Transverse colon (tissue), 4 donors: ENCODE measurements at regions of chr11 and their contacts with region 1.

Region 1: DNA sequence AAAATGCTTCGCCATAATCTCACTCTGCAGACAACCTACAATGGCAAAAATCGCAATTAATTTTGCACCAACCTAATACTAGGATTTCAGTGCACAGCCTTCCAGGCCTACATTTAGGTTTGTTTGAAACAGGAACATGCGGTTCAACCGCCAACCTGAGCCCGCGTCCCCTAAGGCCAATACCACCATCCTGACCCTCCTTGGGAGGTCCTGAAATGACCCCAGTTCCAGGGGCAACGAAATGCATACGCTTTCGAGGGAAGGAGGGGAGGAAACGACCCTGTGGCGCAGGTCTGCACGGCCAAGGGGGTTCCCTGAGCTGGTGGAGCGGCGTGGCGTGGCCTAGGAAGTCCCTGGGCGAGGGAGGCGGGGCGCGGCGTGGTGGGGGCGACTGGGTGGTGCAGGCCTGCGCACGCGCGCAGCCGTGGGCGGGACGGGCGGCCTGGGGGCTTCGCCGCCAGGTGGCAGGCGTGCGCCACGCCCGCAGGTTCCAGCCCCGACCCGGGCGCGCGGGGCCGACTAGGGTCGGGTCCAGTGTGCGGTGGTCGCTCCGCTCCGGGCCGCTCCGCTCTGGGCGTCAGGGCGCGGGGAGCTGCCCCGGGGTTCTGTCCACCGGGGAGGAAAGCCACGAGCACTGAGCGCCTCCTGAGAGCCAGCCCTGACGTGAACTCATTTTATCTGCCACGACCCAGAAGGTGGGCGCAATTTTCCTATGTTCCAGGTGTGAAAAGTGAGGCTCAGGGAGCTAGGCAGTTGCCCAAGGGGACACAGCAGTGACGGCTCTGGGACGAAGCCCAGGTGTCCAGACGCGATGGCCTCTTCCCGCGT is 94.1 kb downstream of the SWAP70 start:
- DNase-seq: peak; percentile 92
- H3K4me3 ChIP-seq: peak overlapping the region; percentile 47 to 73 (median 60)
- H3K27ac ChIP-seq: peak overlapping the region; percentile 86 to 94 (median 91)
- H3K4me1 ChIP-seq: peaks cover 20 to 40% (median 28%) of the 10 kb centered on the region in 4 donors
- H3K27me3 ChIP-seq: no peaks in the 10 kb centered on the region
- CTCF ChIP-seq: peak; percentile 37 to 87 (median 77)
- EP300 ChIP-seq: no peak
- POLR2A ChIP-seq: peak; percentile 44

Region 2: DNA sequence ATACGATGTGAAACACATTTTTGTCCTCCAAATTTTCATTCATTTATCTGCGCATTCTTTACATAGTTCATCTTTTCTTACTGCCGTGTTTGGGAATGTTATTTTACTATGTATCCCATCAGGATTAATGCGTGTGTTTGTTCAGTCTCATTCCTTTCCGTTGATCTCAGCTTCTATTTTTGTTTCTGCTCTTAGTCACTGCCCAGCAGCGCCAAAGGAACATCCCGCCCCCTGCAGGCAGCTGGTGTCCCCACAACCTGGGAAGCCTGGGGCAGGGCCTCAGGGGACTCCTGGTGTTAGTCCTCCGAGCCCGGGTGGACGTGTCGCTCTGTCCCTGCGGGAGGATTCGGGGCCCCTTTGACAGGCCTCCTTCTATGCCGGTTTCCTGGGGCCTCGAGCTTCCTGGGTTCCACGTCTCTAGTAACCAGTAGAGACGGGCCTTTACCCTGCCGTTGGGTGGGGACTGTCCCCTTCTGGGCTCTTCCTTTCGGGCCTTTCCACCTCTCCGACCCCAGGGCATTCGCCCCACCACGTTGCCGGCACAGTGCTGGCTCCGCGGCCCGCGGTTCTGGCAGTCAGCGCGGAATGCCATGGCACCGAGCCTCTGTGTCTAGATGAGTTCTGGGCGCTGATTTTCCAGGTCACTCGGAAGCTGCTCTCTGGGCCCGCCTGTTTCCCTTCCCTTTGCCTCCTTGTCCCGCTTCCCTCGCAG is 144.7 kb before region 1 on chr11:
- in situ Hi-C with region 1: loop called in 1 of 4 experiments (anchors 10 kb)
- intact Hi-C with region 1: loop called (anchors 10 kb)
- DNase-seq: peak; percentile 95
- H3K4me3 ChIP-seq: peak overlapping the region; percentile 10 to 49 (median 39)
- H3K27ac ChIP-seq: peak overlapping the region; percentile 89 to 98 (median 96)
- H3K4me1 ChIP-seq: peaks cover 0 to 25% (median 9%) of the 10 kb centered on the region in 4 donors
- H3K27me3 ChIP-seq: no peaks in the 10 kb centered on the region
- CTCF ChIP-seq: peak; percentile 93 to 99 (median 95)
- EP300 ChIP-seq: peak; percentile 71
- POLR2A ChIP-seq: peak; percentile 73

Region 3: GRCh38 chr11:10307442-10308207 is 549.6 kb after region 1 on chr11:
- in situ Hi-C with region 1: loop called in 3 of 4 experiments (anchors 10 to 25 kb)
- intact Hi-C with region 1: loop called (anchors 5 kb)
- DNase-seq: peak; percentile 89
- H3K4me3 ChIP-seq: peak overlapping the region; percentile 48 to 74 (median 60)
- H3K27ac ChIP-seq: peak overlapping the region; percentile 90 to 96 (median 92)
- H3K4me1 ChIP-seq: peaks cover 13 to 60% (median 41%) of the 10 kb centered on the region in 4 donors
- H3K27me3 ChIP-seq: peaks cover 3% of the 10 kb centered on the region
- CTCF ChIP-seq: peak; percentile 98 to 100 (median 100)
- EP300 ChIP-seq: no peak
- POLR2A ChIP-seq: peak; percentile 53

Region 4: GRCh38 chr11:10322830-10323792 is 565.1 kb after region 1 on chr11:
- in situ Hi-C with region 1: loop called (anchors 10 to 25 kb)
- intact Hi-C with region 1: loop called (anchors 5 kb)
- DNase-seq: peak; percentile 65
- H3K4me3 ChIP-seq: no peak overlapping the region
- H3K27ac ChIP-seq: peak overlapping the region; percentile 69 to 79 (median 78)
- H3K4me1 ChIP-seq: peaks cover 10 to 54% (median 33%) of the 10 kb centered on the region in 4 donors
- H3K27me3 ChIP-seq: no peaks in the 10 kb centered on the region
- CTCF ChIP-seq: peak; percentile 49 to 88 (median 56)
- EP300 ChIP-seq: peak; percentile 29
- POLR2A ChIP-seq: no peak